Mammary epithelial cell (primary cell): ENCODE measurements at regions of chr11 and their contacts with region 1.

Region 1: GRCh38 chr11:122803306-122803705 is 35.0 kb upstream of the CRTAM start:
- DNase-seq: peak; percentile 100
- H3K4me3 ChIP-seq: no peak overlapping the region
- H3K27ac ChIP-seq: peak overlapping the region; percentile 100
- H3K4me1 ChIP-seq: peaks cover 56% of the 10 kb centered on the region
- H3K27me3 ChIP-seq: no peaks in the 10 kb centered on the region
- CTCF ChIP-seq: no peak

Region 2: DNA sequence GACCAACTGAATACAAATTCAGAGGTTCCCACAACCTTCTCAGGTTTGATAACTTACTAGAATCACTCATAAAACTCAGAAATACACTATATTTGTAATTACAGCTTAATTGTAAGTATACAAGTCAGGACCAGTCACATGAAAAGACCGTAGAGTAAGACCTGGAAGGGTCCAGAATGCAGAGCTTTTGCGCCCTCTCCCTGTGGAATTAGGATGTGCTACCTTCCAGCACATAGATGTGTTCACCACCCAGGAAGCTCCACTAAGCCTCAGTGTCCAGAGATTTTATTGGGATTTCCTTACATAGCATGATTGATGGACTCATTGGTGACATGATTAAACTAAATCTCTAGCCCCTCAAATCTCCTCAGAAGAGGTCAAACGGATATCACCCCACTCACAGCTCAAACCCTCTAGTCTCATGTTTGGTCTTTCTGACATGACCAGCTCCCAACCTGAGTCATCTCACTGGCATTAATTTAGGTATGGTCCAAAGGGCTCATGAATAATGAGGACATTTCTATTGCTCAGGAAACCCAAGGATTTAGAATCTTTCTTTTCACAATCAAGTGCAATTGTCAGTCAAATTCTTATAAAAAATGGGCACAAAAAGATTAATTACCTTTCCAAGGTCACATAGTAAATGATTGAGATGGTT is 225.0 kb before region 1 on chr11:
- CTCF ChIA-PET with region 1: no interaction called
- dilution Hi-C with region 1: no loop called
- in situ Hi-C with region 1: no loop called
- intact Hi-C with region 1: loop called (anchors 1 kb)
- DNase-seq: no peak
- H3K4me3 ChIP-seq: no peak overlapping the region
- H3K27ac ChIP-seq: no peak overlapping the region
- H3K4me1 ChIP-seq: peaks cover 10% of the 10 kb centered on the region
- H3K27me3 ChIP-seq: no peaks in the 10 kb centered on the region
- CTCF ChIP-seq: no peak

Region 3: DNA sequence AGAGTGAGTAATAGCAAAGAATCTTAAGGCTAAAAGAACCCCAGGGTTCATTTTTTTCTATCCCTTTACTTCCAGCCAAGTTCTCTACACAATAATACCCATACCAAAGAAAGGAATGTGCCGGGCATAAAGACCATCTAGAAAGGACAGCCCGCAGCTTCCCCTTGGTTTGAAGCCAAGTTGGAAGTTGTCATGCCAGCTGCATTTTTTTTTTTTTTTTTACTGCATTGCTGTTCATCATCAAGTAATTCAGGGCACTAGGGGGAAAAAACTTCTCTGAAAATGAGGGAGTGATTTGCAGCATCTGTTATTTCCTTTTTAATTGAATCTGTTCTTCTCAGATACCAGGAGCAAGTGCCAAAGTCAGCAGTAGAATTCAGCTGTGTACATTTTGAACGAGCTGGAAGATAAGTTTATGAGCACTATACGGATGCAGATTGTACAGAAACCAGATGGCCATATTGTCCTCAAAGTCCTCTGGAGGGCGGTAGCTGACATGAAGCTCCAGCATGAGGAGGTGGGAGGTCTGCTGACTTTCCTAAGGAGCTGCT is 91.4 kb before region 1 on chr11:
- CTCF ChIA-PET with region 1: no interaction called
- dilution Hi-C with region 1: no loop called
- in situ Hi-C with region 1: no loop called
- intact Hi-C with region 1: no loop called
- DNase-seq: peak; percentile 53
- H3K4me3 ChIP-seq: no peak overlapping the region
- H3K27ac ChIP-seq: no peak overlapping the region
- H3K4me1 ChIP-seq: peaks cover 50% of the 10 kb centered on the region
- H3K27me3 ChIP-seq: no peaks in the 10 kb centered on the region
- CTCF ChIP-seq: no peak

Region 4: DNA sequence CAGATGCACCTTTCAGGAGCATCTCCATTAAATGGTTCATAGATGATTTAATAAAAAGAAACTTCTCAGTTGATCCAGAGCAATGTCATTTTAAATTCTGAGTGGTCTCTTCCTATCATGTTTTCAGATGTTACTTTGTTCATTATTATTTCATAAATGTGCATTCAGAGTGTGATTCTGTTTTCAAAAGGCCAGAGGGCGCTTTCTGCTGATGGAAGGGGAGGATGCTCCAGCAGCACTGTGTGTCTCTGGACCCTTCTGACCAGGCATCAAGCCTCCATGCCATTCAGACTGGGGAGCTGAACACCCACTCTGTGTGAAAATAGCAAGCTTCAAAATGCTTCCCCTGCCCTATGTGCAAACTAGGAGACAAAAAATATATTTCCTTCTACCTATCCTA is 11.1 kb after region 1 on chr11:
- CTCF ChIA-PET with region 1: no interaction called
- dilution Hi-C with region 1: no loop called
- in situ Hi-C with region 1: no loop called
- intact Hi-C with region 1: loop called (anchors 1 kb)
- DNase-seq: no peak
- H3K4me3 ChIP-seq: no peak overlapping the region
- H3K27ac ChIP-seq: no peak overlapping the region
- H3K4me1 ChIP-seq: peaks cover 16% of the 10 kb centered on the region
- H3K27me3 ChIP-seq: no peaks in the 10 kb centered on the region
- CTCF ChIP-seq: peak; percentile 14 to 35

Region 5: GRCh38 chr11:122853971-122854446 is 50.7 kb after region 1 on chr11:
- CTCF ChIA-PET with region 1: interaction called, 6 read pairs
- dilution Hi-C with region 1: loop called (anchors 5 kb)
- in situ Hi-C with region 1: loop called in 1 of 2 experiments (anchors 5 kb)
- intact Hi-C with region 1: loop called (anchors 1 kb)
- DNase-seq: peak; percentile 72
- H3K4me3 ChIP-seq: no peak overlapping the region
- H3K27ac ChIP-seq: no peak overlapping the region
- H3K4me1 ChIP-seq: peaks cover 35% of the 10 kb centered on the region
- H3K27me3 ChIP-seq: no peaks in the 10 kb centered on the region
- CTCF ChIP-seq: peak; percentile 63 to 67

Region 6: DNA sequence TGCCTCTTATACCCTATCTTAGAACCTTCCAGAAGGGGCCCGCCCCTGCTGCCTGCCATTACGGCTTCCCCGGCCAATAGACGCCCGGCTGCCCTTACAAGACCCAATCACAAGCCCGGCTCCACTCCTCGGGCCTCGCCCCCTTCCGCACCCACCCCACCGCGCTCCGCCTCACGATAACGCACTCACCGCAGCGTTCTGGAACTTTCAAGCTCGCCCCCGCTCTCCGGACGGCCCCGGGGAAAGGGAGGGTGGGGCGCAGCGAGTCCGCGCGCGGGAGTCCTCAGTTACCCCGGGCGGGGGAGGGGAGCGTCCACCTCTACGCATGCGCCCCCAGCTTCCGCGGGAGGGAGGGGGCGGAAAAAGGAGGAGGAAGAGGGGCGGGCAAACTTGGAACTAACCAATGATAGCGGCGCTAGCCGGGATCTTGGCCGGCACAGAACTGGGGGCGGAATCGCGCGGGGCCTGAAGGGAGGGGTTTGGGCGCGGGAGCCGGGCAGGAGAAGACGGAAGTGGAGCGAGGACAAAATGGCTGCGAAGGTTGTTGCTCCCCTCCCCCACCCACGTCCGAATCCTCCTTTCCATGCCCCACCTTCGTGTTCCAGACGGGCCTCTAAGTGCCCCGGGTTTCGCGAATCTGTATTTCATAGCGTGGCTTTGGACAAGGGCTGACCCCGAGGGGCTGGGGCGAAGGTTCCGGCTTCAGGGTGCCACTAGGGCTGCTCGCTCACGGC is 259.0 kb after region 1 on chr11:
- CTCF ChIA-PET with region 1: interaction called, 17 read pairs
- dilution Hi-C with region 1: no loop called
- in situ Hi-C with region 1: no loop called
- intact Hi-C with region 1: loop called (anchors 1 kb)
- DNase-seq: peak; percentile 100
- H3K4me3 ChIP-seq: peak overlapping the region; percentile 85 to 96 (median 91)
- H3K27ac ChIP-seq: peak overlapping the region; percentile 99
- H3K4me1 ChIP-seq: peaks cover 26% of the 10 kb centered on the region
- H3K27me3 ChIP-seq: no peaks in the 10 kb centered on the region
- CTCF ChIP-seq: no peak